Panc1 (cell line): ENCODE measurements at regions of chr22 and their contacts with region 1.

Region 1: GRCh38 chr22:35950262-35950661 is 78.4 kb downstream of the RBFOX2 start:
- DNase-seq: no peak
- ATAC-seq: no peak
- H3K4me3 ChIP-seq: no peak overlapping the region
- H3K27ac ChIP-seq: no peak overlapping the region
- H3K4me1 ChIP-seq: no peaks in the 10 kb centered on the region
- H3K27me3 ChIP-seq: no peaks in the 10 kb centered on the region
- CTCF ChIP-seq: no peak

Region 2: DNA sequence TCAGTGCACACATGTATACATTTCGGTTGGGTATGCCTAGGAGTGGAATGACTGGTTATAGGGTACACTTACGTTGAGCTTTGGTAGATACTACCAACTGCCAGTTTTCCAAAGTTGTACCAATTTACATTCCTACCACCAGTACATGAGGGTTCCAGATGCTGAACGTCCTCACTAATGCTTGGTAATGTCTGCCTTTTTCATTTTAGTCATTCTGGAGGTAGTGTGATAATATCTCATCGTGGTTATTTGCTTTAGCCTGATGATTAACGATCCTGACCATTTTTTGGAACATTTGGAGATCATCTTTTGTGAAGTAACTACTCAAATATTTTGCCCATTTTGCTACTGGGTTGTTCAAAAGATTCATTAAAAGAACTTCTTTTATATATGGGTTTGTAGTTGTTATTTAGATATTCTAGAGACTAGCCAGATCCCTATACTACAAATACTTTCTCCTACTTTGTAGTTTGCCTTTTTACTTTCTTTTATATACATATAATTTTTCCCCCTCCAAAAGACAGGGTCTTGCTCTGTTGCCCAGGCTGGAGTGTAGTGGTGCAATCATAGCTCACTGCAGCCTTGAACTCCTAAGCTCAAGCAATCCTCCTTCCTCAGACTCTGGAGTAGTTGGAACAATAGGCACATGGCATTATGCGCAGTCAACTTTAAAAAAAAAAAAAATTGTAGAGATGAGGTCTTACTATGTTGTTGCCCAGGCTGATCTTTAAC is 16.2 kb after region 1 on chr22:
- CTCF ChIA-PET with region 1: no interaction called
- POLR2A ChIA-PET with region 1: no interaction called
- in situ Hi-C with region 1: no loop called
- intact Hi-C with region 1: no loop called
- DNase-seq: no peak
- ATAC-seq: no peak
- H3K4me3 ChIP-seq: no peak overlapping the region
- H3K27ac ChIP-seq: no peak overlapping the region
- H3K4me1 ChIP-seq: peaks cover 6% of the 10 kb centered on the region; the same call in 1 of the 2 replicates
- H3K27me3 ChIP-seq: no peaks in the 10 kb centered on the region
- CTCF ChIP-seq: no peak

Region 3: DNA sequence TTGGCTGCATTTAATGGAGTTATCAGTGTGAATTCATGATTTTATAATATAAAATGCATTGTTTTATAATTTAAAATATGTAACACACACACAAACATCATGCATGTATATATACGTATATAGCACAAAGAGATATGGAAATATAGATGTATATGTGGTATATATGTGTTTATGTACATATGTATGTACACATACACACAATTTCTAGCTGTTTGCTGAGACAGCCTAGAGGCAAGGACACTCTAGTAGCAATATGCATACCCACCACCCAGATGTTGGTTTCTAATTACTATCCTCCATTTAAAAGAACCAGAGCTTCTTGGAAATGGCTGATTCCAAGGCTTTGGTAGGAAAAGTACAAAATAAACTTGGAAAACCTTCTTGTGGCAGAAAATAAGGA is 27.9 kb after region 1 on chr22:
- CTCF ChIA-PET with region 1: no interaction called
- POLR2A ChIA-PET with region 1: interaction called, 19 read pairs
- in situ Hi-C with region 1: no loop called
- intact Hi-C with region 1: no loop called
- DNase-seq: no peak
- ATAC-seq: no peak
- H3K4me3 ChIP-seq: no peak overlapping the region
- H3K27ac ChIP-seq: no peak overlapping the region
- H3K4me1 ChIP-seq: no peaks in the 10 kb centered on the region
- H3K27me3 ChIP-seq: no peaks in the 10 kb centered on the region
- CTCF ChIP-seq: no peak